Naive thymus-derived CD4-positive, alpha-beta T cell (primary cell): ENCODE measurements at regions of chr6 and their contacts with region 1.

Region 1: DNA sequence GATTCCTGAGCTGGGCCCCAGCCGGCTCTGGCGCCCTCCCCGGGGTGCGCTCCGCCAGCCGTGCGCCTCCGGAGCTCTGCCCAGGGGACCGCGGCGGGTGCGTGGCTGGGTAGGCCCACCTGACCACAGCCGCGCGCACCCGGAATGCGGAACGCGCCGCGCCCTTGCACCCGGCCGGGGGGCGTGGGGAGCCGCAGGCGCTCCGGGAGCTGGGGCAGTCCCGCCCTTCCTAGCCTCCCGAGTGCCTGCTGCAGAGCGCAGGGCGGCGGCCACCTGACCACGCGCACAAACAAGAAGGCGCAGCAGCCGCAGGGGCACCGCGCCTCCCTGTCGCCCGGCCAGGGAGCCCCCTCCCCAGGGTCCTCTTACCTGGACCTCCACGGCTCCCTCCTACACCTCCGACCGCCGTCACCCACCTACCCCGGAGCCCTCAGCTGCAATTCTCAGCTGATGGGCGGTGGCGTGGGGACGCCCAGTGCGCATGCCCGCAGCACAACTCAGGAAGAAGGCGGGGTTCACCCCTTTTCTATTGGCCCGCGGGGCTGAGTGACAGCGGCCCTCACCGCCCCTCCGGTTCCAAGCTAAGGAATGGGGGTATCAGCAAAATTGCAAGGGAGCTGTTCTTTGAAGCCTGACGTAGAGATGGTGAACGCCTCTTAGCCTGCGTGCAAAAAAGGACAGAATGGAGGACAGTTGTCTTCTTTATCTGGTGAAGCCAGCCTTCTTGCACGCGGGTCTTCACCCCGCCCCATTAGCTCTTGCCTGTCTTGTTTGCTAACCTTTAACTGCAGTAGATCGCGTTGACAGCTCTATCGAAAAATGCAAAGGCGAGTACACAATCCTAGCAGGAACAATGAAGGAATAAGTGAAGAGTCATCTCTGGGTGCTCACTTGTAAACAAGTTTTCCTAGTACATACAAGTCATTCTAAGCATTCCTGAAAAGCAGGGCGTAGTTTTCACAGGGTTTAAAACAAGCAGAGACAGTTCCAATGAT is at the start of gene STX7:
- DNase-seq: peak; percentile 77 to 90 (median 87)
- ATAC-seq: peak; percentile 95
- H3K4me3 ChIP-seq: peak within 1 kb of the TSS; percentile 78
- H3K4me3 Mint-ChIP-seq: peak within 1 kb of the TSS; percentile 89 to 99 (median 98)
- H3K27ac ChIP-seq: peak within 1 kb of the TSS; percentile 63
- H3K27ac Mint-ChIP-seq: peak within 1 kb of the TSS; percentile 81 to 95 (median 90)
- H3K4me1 ChIP-seq: peaks cover 10 to 11% of the 10 kb centered on the region in 2 donors
- H3K4me1 Mint-ChIP-seq: peaks cover 23 to 50% (median 38%) of the 10 kb centered on the region in 7 donors
- H3K27me3 ChIP-seq: no peaks in the 10 kb centered on the region
- H3K27me3 Mint-ChIP-seq: peaks cover 0 to 24% (median 0%) of the 10 kb centered on the region in 5 donors
- total RNA-seq, gene STX7: 14.7 to 43.3 (median 24.0) TPM

Region 2: DNA sequence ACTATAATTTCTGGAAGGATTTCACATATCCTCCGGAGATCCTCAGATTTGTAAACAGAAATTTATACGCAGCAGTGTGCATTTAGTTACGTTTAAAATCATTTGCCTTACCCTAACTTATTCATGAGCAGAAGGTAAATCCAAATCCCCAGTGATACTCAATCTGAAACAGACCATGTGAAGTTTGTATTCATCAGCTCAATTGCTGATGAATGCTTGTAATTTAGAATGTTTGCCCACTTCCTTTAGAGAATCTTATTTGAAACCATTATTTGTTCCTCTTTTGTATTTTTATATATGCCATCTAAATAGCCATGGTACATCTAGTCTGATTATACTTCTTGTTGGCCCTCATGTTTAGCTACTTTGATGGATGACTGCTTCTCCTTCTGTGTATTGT is 130.6 kb after region 1 on chr6:
- CTCF ChIA-PET with region 1: no interaction called
- POLR2A ChIA-PET with region 1: no interaction called
- intact Hi-C with region 1: no loop called
- DNase-seq: no peak
- ATAC-seq: no peak
- H3K4me3 ChIP-seq: no peak overlapping the region
- H3K4me3 Mint-ChIP-seq: no peak overlapping the region
- H3K27ac ChIP-seq: no peak overlapping the region
- H3K27ac Mint-ChIP-seq: no peak overlapping the region
- H3K4me1 ChIP-seq: peaks cover 0 to 4% of the 10 kb centered on the region in 2 donors
- H3K4me1 Mint-ChIP-seq: peaks cover 0 to 4% (median 0%) of the 10 kb centered on the region in 7 donors
- H3K27me3 ChIP-seq: no peaks in the 10 kb centered on the region
- H3K27me3 Mint-ChIP-seq: peaks cover 0 to 31% (median 10%) of the 10 kb centered on the region in 5 donors

Region 3: GRCh38 chr6:132768051-132768517 is 255.1 kb after region 1 on chr6:
- CTCF ChIA-PET with region 1: no interaction called
- POLR2A ChIA-PET with region 1: interaction called, 3 read pairs
- intact Hi-C with region 1: loop called in 1 of 2 experiments (anchors 1 kb)
- DNase-seq: peak in 6 of 9 donors; percentile 7 to 23 (median 11)
- ATAC-seq: peak; percentile 79
- H3K4me3 ChIP-seq: no peak overlapping the region
- H3K4me3 Mint-ChIP-seq: no peak overlapping the region
- H3K27ac ChIP-seq: no peak overlapping the region
- H3K27ac Mint-ChIP-seq: peak overlapping the region in 2 of 9 donors; percentile 14 to 40
- H3K4me1 ChIP-seq: peaks cover 8 to 9% of the 10 kb centered on the region in 2 donors
- H3K4me1 Mint-ChIP-seq: peaks cover 13 to 20% (median 15%) of the 10 kb centered on the region in 7 donors
- H3K27me3 ChIP-seq: no peaks in the 10 kb centered on the region
- H3K27me3 Mint-ChIP-seq: peaks cover 0 to 2% (median 0%) of the 10 kb centered on the region in 5 donors

Region 4: DNA sequence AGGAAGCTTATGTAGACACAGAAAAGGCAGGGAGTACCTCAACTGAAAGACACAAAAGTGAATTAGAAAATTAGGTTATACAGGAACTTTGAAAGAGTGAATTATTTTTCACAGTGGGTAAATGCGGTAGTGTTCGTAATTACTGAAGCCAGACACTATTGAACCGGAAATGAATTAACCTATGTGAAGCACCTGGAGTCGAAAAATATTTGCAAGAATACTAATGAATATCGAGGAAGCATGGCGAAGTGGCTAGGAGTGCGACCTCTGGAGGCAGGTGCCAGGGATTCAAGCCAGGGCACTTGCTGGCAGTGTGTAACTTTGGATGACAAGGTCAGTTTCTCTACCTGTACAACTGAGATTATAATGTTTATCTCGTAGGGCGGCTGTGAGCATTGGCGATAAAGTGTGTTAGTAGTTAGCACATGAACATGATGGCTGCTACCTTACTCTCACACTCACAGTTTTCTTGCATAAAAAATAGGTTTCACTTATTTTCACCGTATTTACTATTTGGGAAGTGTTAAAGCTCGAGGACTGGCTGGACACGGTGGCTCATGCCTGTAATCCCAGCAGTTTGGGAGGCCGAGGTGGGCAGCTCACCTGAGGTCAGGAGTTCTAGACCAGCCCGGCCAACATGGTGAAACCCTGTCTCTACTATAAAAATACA is 286.1 kb after region 1 on chr6:
- CTCF ChIA-PET with region 1: no interaction called
- POLR2A ChIA-PET with region 1: interaction called, 5 read pairs
- intact Hi-C with region 1: loop called in 1 of 2 experiments (anchors 1 kb)
- DNase-seq: peak; percentile 35 to 70 (median 64)
- ATAC-seq: peak; percentile 91
- H3K4me3 ChIP-seq: no peak overlapping the region
- H3K4me3 Mint-ChIP-seq: no peak overlapping the region
- H3K27ac ChIP-seq: no peak overlapping the region
- H3K27ac Mint-ChIP-seq: peak overlapping the region in 1 of 9 donors; percentile 87
- H3K4me1 ChIP-seq: no peaks in the 10 kb centered on the region
- H3K4me1 Mint-ChIP-seq: peaks cover 6 to 49% (median 40%) of the 10 kb centered on the region in 7 donors
- H3K27me3 ChIP-seq: no peaks in the 10 kb centered on the region
- H3K27me3 Mint-ChIP-seq: peaks cover 0 to 12% (median 0%) of the 10 kb centered on the region in 5 donors

Region 5: GRCh38 chr6:132813173-132813856 is 300.4 kb after region 1 on chr6:
- CTCF ChIA-PET with region 1: no interaction called
- POLR2A ChIA-PET with region 1: interaction called, 12 read pairs
- intact Hi-C with region 1: loop called (anchors 1 kb)
- DNase-seq: peak in 8 of 9 donors; percentile 31 to 71 (median 62)
- ATAC-seq: no peak
- H3K4me3 ChIP-seq: peak overlapping the region; percentile 90
- H3K4me3 Mint-ChIP-seq: peak overlapping the region; percentile 91 to 100 (median 98)
- H3K27ac ChIP-seq: peak overlapping the region; percentile 80
- H3K27ac Mint-ChIP-seq: peak overlapping the region; percentile 95 to 100 (median 98)
- H3K4me1 ChIP-seq: peaks cover 23 to 26% of the 10 kb centered on the region in 2 donors
- H3K4me1 Mint-ChIP-seq: peaks cover 29 to 54% (median 43%) of the 10 kb centered on the region in 7 donors
- H3K27me3 ChIP-seq: no peaks in the 10 kb centered on the region
- H3K27me3 Mint-ChIP-seq: peaks cover 0 to 30% (median 0%) of the 10 kb centered on the region in 5 donors

Region 6: GRCh38 chr6:133973109-133973971 is 1460.4 kb after region 1 on chr6:
- CTCF ChIA-PET with region 1: no interaction called
- POLR2A ChIA-PET with region 1: no interaction called
- intact Hi-C with region 1: loop called in 1 of 2 experiments (anchors 5 kb)
- DNase-seq: peak in 7 of 9 donors; percentile 16 to 53 (median 43)
- ATAC-seq: peak; percentile 79
- H3K4me3 ChIP-seq: no peak overlapping the region
- H3K4me3 Mint-ChIP-seq: no peak overlapping the region
- H3K27ac ChIP-seq: no peak overlapping the region
- H3K27ac Mint-ChIP-seq: peak overlapping the region in 2 of 9 donors; percentile 45 to 79
- H3K4me1 ChIP-seq: peaks cover 0 to 6% of the 10 kb centered on the region in 2 donors
- H3K4me1 Mint-ChIP-seq: peaks cover 16 to 67% (median 59%) of the 10 kb centered on the region in 7 donors
- H3K27me3 ChIP-seq: no peaks in the 10 kb centered on the region
- H3K27me3 Mint-ChIP-seq: no peaks in the 10 kb centered on the region